Right lobe of liver (tissue), 6 donors: ENCODE measurements at regions of chr17 and their contacts with region 1.

Region 1: DNA sequence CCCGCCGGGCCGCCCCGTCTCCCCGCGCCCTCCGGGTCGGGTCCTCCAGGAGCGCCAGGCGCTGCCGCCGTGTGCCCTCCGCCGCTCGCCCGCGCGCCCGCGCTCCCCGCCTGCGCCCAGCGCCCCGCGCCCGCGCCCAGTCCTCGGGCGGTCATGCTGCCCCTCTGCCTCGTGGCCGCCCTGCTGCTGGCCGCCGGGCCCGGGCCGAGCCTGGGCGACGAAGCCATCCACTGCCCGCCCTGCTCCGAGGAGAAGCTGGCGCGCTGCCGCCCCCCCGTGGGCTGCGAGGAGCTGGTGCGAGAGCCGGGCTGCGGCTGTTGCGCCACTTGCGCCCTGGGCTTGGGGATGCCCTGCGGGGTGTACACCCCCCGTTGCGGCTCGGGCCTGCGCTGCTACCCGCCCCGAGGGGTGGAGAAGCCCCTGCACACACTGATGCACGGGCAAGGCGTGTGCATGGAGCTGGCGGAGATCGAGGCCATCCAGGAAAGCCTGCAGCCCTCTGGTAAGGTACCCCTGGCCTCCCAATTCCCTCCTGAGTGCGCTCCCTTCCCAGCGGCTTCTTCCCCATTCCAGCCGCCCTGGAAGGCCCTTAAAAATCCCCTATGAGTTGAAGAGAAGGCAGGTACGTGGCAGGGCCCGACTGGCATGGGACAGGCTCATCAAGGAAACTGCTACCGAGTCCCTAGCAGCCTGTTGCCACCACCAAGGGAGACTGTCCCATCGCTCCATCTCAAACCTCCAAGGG is 505 bp downstream of the IGFBP4 start:
- DNase-seq: peak; percentile 77 to 85 (median 81)
- ATAC-seq: peak in 3 of 4 donors; percentile 5 to 19 (median 8)
- H3K4me3 ChIP-seq: peak overlapping the region; percentile 88 to 94 (median 89)
- H3K27ac ChIP-seq: peak overlapping the region; percentile 92 to 98 (median 96)
- H3K4me1 ChIP-seq: peaks cover 0 to 27% (median 3%) of the 10 kb centered on the region in 4 donors
- H3K27me3 ChIP-seq: no peaks in the 10 kb centered on the region
- CTCF ChIP-seq: peak; percentile 23 to 53 (median 26)
- POLR2A ChIP-seq: peak; percentile 56

Region 2: DNA sequence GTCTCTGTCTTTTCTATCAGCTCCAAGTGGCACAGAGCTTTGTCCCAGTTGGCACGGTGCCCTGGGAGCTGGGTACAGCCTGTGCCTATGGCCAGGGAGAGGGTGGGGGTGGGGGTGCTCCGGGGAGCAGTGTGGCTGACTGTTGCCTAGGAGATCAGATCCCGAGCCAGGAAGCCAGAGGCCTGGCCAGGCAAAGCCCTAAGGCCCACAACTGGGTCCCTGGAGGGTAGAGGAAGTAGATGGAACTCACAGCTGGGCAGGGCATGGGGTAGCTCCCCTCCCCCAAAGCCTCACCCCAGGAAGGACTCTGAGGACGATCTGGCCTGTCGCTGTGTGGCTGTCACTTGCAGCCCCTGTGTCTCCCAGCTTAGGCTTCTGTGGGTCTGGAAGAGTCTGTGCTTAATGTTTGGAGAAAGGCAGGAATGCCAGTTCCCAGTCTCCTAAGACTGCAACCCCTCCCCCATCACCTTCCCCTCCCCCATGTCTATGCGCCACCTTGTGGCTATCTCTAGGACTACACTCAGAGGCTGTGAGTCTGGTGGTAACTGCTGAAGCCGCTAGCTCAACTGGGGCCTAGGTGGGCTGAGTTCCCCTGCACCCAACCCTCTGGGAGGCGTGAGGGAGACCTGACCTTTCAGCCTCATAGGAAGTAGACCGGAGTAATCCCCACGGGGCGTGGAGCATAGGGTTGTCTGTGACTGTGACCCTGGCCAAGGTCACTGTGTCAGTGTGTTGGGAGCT is 368.4 kb before region 1 on chr17:
- intact Hi-C with region 1: no loop called
- DNase-seq: peak; percentile 57 to 74 (median 71)
- ATAC-seq: peak; percentile 78 to 87 (median 80)
- H3K4me3 ChIP-seq: no peak overlapping the region
- H3K27ac ChIP-seq: peak overlapping the region in 2 of 3 donors; percentile 5 to 16
- H3K4me1 ChIP-seq: peaks cover 2 to 38% (median 22%) of the 10 kb centered on the region in 4 donors
- H3K27me3 ChIP-seq: no peaks in the 10 kb centered on the region
- CTCF ChIP-seq: peak; percentile 77 to 90 (median 82)
- POLR2A ChIP-seq: no peak

Region 3: GRCh38 chr17:40287494-40288369 is 156.0 kb before region 1 on chr17 and contains the start of gene CDC6:
- intact Hi-C with region 1: no loop called
- DNase-seq: peak; percentile 97 to 99 (median 98)
- ATAC-seq: peak; percentile 92 to 98 (median 97)
- H3K4me3 ChIP-seq: peak within 1 kb of the TSS; percentile 35 to 64 (median 62)
- H3K27ac ChIP-seq: peak within 1 kb of the TSS in 1 of 3 donors; percentile 35
- H3K4me1 ChIP-seq: peaks cover 0 to 36% (median 8%) of the 10 kb centered on the region in 4 donors
- H3K27me3 ChIP-seq: no peaks in the 10 kb centered on the region
- CTCF ChIP-seq: no peak
- POLR2A ChIP-seq: peak; percentile 58
- total RNA-seq, gene CDC6: 0.42 to 9.1 (median 3.1) TPM

Region 4: GRCh38 chr17:40378966-40379365 is 64.8 kb before region 1 on chr17:
- intact Hi-C with region 1: no loop called
- DNase-seq: no peak
- ATAC-seq: no peak
- H3K4me3 ChIP-seq: no peak overlapping the region
- H3K27ac ChIP-seq: no peak overlapping the region
- H3K4me1 ChIP-seq: no peaks in the 10 kb centered on the region
- H3K27me3 ChIP-seq: no peaks in the 10 kb centered on the region
- CTCF ChIP-seq: no peak
- POLR2A ChIP-seq: no peak

Region 5: GRCh38 chr17:40536295-40537171 is 92.8 kb after region 1 on chr17:
- intact Hi-C with region 1: loop called in 1 of 2 experiments (anchors 10 kb)
- DNase-seq: no peak
- ATAC-seq: peak in 2 of 4 donors; percentile 1 to 2
- H3K4me3 ChIP-seq: no peak overlapping the region
- H3K27ac ChIP-seq: peak overlapping the region in 1 of 3 donors; percentile 63
- H3K4me1 ChIP-seq: peaks cover 0 to 53% (median 16%) of the 10 kb centered on the region in 4 donors
- H3K27me3 ChIP-seq: no peaks in the 10 kb centered on the region
- CTCF ChIP-seq: no peak
- POLR2A ChIP-seq: no peak

Region 6: GRCh38 chr17:40548982-40549685 is 105.4 kb after region 1 on chr17:
- intact Hi-C with region 1: loop called in 1 of 2 experiments (anchors 5 kb)
- DNase-seq: peak; percentile 70 to 94 (median 88)
- ATAC-seq: peak; percentile 67 to 81 (median 73)
- H3K4me3 ChIP-seq: peak overlapping the region in 2 of 3 donors; percentile 6 to 22
- H3K27ac ChIP-seq: peak overlapping the region; percentile 88 to 97 (median 97)
- H3K4me1 ChIP-seq: peaks cover 0 to 70% (median 28%) of the 10 kb centered on the region in 4 donors
- H3K27me3 ChIP-seq: no peaks in the 10 kb centered on the region
- CTCF ChIP-seq: no peak
- POLR2A ChIP-seq: peak; percentile 72